Heart right ventricle (tissue), 16 donors: ENCODE measurements at regions of chr3 and their contacts with region 1.

Region 1: DNA sequence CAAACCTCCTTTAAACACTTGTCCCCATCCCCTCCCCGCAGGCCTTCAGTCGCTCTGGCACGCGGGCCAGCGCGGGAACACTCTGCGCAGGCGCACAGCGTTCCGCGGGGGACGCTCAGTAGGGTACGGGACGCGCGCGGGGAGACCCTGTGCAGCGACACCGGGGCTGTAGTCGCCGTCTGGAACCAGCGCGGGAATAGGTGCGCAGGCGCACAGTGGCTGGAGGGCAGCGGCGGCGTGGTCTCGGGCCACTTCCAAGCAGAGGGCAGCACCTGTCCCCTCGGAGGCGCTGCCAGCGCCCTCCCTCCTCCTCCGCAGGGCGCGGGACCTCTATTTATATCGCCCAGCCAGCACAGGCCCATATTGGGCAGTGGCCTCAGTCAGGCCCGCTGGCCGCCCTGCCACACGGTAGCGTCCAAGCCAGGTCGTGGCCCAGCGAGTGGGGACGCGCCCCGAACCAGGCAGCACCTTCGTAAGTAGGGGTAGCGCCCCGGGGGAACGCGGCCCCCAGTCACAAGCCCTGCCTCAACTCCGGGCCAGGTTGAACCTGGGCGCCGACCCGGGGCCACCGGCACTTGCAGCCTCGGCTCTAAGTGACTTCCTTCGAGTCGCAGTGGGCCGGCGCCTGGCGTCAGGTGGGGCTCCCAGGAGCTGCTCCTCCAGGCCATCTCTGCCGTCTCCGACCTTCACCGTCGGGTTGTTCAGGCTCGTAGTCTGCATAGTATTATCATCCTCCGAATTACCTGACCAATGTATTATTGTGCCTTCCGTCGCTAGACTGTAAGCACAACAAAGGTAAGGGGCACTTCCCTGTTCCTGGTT is at the start of gene KBTBD12:
- DNase-seq: peak; percentile 66 to 73
- ATAC-seq: peak; percentile 79 to 97 (median 90)
- H3K4me3 ChIP-seq: peak within 1 kb of the TSS; percentile 11 to 62 (median 55)
- H3K27ac ChIP-seq: peak within 1 kb of the TSS; percentile 27 to 90 (median 84)
- H3K4me1 ChIP-seq: peaks cover 5 to 55% (median 25%) of the 10 kb centered on the region in 9 donors
- H3K27me3 ChIP-seq: peaks cover 0 to 20% (median 0%) of the 10 kb centered on the region in 7 donors
- CTCF ChIP-seq: peak in 3 of 9 donors; percentile 9 to 22 (median 17)
- total RNA-seq, gene KBTBD12: 18.3 to 54.2 (median 35.3) TPM

Region 2: GRCh38 chr3:127953091-127954035 is 38.0 kb after region 1 on chr3:
- intact Hi-C with region 1: loop called in 3 of 10 experiments (anchors 2 to 5 kb)
- DNase-seq: peak in 1 of 2 donors; percentile 43
- ATAC-seq: peak; percentile 54 to 89 (median 78)
- H3K4me3 ChIP-seq: no peak overlapping the region
- H3K27ac ChIP-seq: peak overlapping the region; percentile 46 to 94 (median 86)
- H3K4me1 ChIP-seq: peaks cover 2 to 65% (median 34%) of the 10 kb centered on the region in 9 donors
- H3K27me3 ChIP-seq: no peaks in the 10 kb centered on the region
- CTCF ChIP-seq: no peak

Region 3: DNA sequence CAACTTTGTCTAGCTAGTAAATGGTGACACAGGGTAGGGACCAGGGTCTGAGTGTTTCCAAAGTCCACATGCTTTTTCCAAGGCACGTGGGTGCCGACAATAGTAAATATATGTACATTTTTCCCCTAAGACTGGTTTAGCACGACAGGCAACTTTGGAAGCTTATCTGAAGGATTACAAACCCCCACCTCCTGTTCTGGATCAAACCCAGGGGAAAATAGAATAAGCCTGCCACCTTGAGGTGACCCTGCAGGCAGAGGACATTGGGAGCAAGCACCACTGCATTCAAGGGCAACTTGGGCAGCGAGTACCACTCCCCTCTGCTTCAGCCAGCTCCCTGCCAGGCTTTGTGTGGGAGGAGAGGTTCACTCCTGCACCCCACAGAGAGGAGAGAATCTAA is 44.5 kb after region 1 on chr3:
- intact Hi-C with region 1: loop called in 2 of 10 experiments (anchors 2 to 5 kb)
- DNase-seq: peak in 1 of 2 donors; percentile 52
- ATAC-seq: peak; percentile 54 to 74 (median 62)
- H3K4me3 ChIP-seq: no peak overlapping the region
- H3K27ac ChIP-seq: peak overlapping the region in 9 of 10 donors; percentile 23 to 94 (median 69)
- H3K4me1 ChIP-seq: peaks cover 0 to 63% (median 10%) of the 10 kb centered on the region in 9 donors
- H3K27me3 ChIP-seq: no peaks in the 10 kb centered on the region
- CTCF ChIP-seq: peak in 7 of 9 donors; percentile 30 to 66 (median 53)